Activated CD8-positive, alpha-beta T cell treated with anti-CD3 and anti-CD28 coated beads, Interleukin-2, amount 10 ng/mL, durations not matched to agents 7 days and 5 days (primary cell): ENCODE measurements at regions of chr13 and their contacts with region 1.

Region 1: GRCh38 chr13:32669030-32669646 is 82.9 kb downstream of the PDS5B start:
- DNase-seq: peak; percentile 26
- ATAC-seq: peak; percentile 44
- H3K4me3 Mint-ChIP-seq: no peak overlapping the region
- H3K27ac Mint-ChIP-seq: no peak overlapping the region
- H3K4me1 Mint-ChIP-seq: no peaks in the 10 kb centered on the region
- H3K27me3 Mint-ChIP-seq: no peaks in the 10 kb centered on the region

Region 2: GRCh38 chr13:32639502-32640105 is 29.5 kb before region 1 on chr13:
- CTCF ChIA-PET with region 1: interaction called, 24 read pairs
- POLR2A ChIA-PET with region 1: no interaction called
- DNase-seq: peak; percentile 68
- ATAC-seq: peak; percentile 67
- H3K4me3 Mint-ChIP-seq: no peak overlapping the region
- H3K27ac Mint-ChIP-seq: no peak overlapping the region
- H3K4me1 Mint-ChIP-seq: peaks cover 27% of the 10 kb centered on the region
- H3K27me3 Mint-ChIP-seq: no peaks in the 10 kb centered on the region

Region 3: GRCh38 chr13:32650705-32651311 is 18.3 kb before region 1 on chr13:
- CTCF ChIA-PET with region 1: interaction called, 29 read pairs
- POLR2A ChIA-PET with region 1: no interaction called
- DNase-seq: peak; percentile 72
- ATAC-seq: peak; percentile 80
- H3K4me3 Mint-ChIP-seq: no peak overlapping the region
- H3K27ac Mint-ChIP-seq: no peak overlapping the region
- H3K4me1 Mint-ChIP-seq: peaks cover 24% of the 10 kb centered on the region
- H3K27me3 Mint-ChIP-seq: no peaks in the 10 kb centered on the region

Region 4: GRCh38 chr13:32687275-32687674 is 18.1 kb after region 1 on chr13:
- CTCF ChIA-PET with region 1: interaction called, 11 read pairs
- POLR2A ChIA-PET with region 1: no interaction called
- DNase-seq: no peak
- ATAC-seq: no peak
- H3K4me3 Mint-ChIP-seq: no peak overlapping the region
- H3K27ac Mint-ChIP-seq: no peak overlapping the region
- H3K4me1 Mint-ChIP-seq: no peaks in the 10 kb centered on the region
- H3K27me3 Mint-ChIP-seq: no peaks in the 10 kb centered on the region

Region 5: GRCh38 chr13:32838945-32839344 is 169.8 kb after region 1 on chr13:
- CTCF ChIA-PET with region 1: no interaction called
- POLR2A ChIA-PET with region 1: no interaction called
- DNase-seq: peak; percentile 59
- ATAC-seq: peak; percentile 93
- H3K4me3 Mint-ChIP-seq: no peak overlapping the region
- H3K27ac Mint-ChIP-seq: peak overlapping the region; percentile 85
- H3K4me1 Mint-ChIP-seq: peaks cover 24% of the 10 kb centered on the region
- H3K27me3 Mint-ChIP-seq: no peaks in the 10 kb centered on the region

Region 6: GRCh38 chr13:32878172-32878571 is 209.0 kb after region 1 on chr13:
- CTCF ChIA-PET with region 1: no interaction called
- POLR2A ChIA-PET with region 1: no interaction called
- DNase-seq: no peak
- ATAC-seq: no peak
- H3K4me3 Mint-ChIP-seq: no peak overlapping the region
- H3K27ac Mint-ChIP-seq: no peak overlapping the region
- H3K4me1 Mint-ChIP-seq: peaks cover 8% of the 10 kb centered on the region
- H3K27me3 Mint-ChIP-seq: no peaks in the 10 kb centered on the region

Region 7: DNA sequence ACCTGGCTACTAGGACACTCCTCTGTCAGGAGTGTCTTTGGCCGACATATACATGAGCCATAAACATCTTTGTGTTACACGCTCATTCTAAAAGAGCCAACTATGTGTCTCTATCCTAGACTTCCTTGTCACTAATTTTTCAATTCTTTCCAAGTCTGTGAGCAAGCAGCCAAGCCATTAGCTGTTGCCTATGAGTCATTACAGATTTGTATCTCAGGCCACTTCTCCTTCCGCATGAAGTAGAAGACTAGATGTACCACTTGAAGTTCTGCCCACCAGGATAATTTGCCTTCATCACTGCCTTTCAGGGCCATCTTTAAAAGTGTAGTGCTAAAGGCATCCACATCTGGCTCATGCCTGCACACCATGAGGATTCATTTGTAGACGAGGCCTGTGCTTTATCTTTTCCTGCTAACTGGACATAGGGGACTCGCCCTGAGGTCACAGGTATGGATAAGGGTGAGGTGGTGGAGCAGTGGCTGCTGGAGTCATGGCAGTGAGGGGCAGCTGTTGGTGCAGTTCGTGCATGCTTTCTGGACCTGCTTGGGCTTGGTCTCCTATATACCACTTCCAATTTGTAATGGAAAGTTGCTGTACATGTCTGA is 220.9 kb after region 1 on chr13:
- CTCF ChIA-PET with region 1: no interaction called
- POLR2A ChIA-PET with region 1: no interaction called
- DNase-seq: no peak
- ATAC-seq: no peak
- H3K4me3 Mint-ChIP-seq: no peak overlapping the region
- H3K27ac Mint-ChIP-seq: no peak overlapping the region
- H3K4me1 Mint-ChIP-seq: no peaks in the 10 kb centered on the region
- H3K27me3 Mint-ChIP-seq: no peaks in the 10 kb centered on the region

Region 8: DNA sequence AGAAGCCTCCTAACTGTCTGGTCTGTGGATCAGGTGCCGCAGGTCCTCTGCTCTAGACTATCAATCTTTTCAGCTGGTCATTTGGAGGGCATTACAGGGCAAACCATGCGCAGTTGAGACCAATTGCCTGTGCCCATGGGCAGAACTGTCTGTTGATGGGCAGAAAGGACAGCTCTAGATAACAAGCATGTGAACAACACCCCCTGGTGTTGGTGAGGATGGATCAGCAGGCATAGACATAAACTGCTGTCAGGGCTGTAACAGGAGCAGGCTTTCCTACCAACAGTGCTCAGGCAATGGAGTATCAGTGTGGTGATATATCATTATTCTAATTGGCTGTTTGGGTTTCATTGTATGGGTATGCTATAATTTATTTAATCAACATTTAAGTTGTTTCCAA is 242.4 kb after region 1 on chr13:
- CTCF ChIA-PET with region 1: interaction called, 14 read pairs
- POLR2A ChIA-PET with region 1: no interaction called
- DNase-seq: peak; percentile 56
- ATAC-seq: peak; percentile 95
- H3K4me3 Mint-ChIP-seq: no peak overlapping the region
- H3K27ac Mint-ChIP-seq: no peak overlapping the region
- H3K4me1 Mint-ChIP-seq: peaks cover 26% of the 10 kb centered on the region
- H3K27me3 Mint-ChIP-seq: no peaks in the 10 kb centered on the region